ENCODE measurements at regions of chr18 and their contacts with region 1.

Region 1: DNA sequence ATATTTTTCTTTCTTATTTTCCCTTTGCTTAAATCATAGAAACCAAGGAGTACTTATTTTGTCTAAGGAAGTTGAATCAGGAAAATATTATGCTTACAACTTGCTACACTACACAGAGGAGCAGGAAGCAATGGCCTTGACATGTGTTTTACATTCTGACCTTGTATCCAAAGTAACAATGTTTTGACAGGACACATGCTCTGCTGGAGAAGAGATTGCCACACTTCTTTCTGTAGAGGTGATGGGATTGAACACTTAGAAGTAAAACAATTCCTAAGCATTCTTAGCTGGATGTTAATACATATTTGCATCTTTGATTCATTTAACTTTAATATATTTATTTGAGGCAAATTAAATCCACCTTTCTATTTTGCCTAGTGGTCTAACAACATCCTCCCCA is 929.1 kb downstream of the DSC3 start:
- DNase-seq: no peak
- H3K4me3 Mint-ChIP-seq: no peak overlapping the region
- H3K27ac Mint-ChIP-seq: no peak overlapping the region
- H3K4me1 Mint-ChIP-seq: no peaks in the 10 kb centered on the region
- H3K27me3 Mint-ChIP-seq: no peaks in the 10 kb centered on the region

Region 2: DNA sequence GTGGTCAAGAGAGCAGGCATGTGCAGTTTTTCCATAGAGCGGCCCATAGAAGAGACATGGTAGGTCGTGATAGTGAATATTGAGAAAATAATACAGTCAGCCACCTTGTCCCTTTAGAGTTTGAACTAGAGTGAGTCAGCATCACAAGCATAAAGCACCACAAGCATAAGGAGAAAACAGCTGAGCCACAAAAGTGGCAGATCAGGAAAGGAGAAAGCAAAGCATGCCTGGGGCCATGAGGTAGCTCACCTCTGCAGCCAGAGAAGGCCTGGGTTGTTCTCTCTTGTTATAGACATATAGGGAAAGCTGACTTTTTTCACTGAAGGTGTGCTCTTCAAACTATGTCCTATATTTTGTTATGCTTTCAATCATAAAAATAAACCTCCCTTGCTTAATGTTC is 50.1 kb after region 1 on chr18:
- intact Hi-C with region 1: loop called (anchors 10 kb)
- DNase-seq: no peak
- H3K4me3 Mint-ChIP-seq: no peak overlapping the region
- H3K27ac Mint-ChIP-seq: no peak overlapping the region
- H3K4me1 Mint-ChIP-seq: no peaks in the 10 kb centered on the region
- H3K27me3 Mint-ChIP-seq: no peaks in the 10 kb centered on the region

Measured in activated T-helper 2 cell treated with anti-CD3 and anti-CD28 coated beads, Interferon-gamma antibody, Interleukin-2, Interleukin-4, amounts not matched to agents 10 μg/mL and 5 μg/mL and 100 μg/mL, durations not matched to agents 14 hours and 24 hours and 36 hours (primary cell).